Heart left ventricle (tissue), 16 donors: ENCODE measurements at regions of chr11 and their contacts with region 1.

Region 1: GRCh38 chr11:17077520-17078401 is at the start of gene RPS13:
- DNase-seq: peak; percentile 97 to 98 (median 98)
- ATAC-seq: peak; percentile 98 to 99 (median 99)
- H3K4me3 ChIP-seq: peak within 1 kb of the TSS; percentile 58 to 99 (median 92)
- H3K27ac ChIP-seq: peak within 1 kb of the TSS; percentile 69 to 98 (median 94)
- H3K4me1 ChIP-seq: peaks cover 6 to 38% (median 24%) of the 10 kb centered on the region in 12 donors
- H3K27me3 ChIP-seq: no peaks in the 10 kb centered on the region
- CTCF ChIP-seq: no peak
- POLR2A ChIP-seq: peak in 1 of 2 donors; percentile 80
- total RNA-seq, gene RPS13: 614 to 853 (median 747) TPM

Region 2: DNA sequence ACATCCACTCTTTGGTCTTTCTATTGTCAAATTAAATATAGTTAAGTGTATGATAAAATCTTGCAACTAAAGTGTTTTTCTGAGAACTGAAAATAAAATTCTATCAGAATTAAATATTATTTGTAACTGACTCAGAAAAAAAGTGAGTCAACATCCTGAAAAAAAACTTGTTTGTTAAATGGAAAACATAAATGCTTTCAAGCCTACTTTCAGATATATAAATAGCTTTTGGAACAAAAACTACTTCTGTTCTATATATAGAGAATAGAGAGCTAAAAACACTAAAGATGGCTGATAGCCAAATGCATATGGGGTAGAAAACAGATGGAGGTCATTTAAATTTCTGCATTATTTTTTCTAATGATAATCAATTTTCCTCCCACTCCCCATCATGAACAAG is 68.2 kb after region 1 on chr11:
- intact Hi-C with region 1: loop called in 1 of 10 experiments (anchors 10 kb)
- DNase-seq: no peak
- ATAC-seq: no peak
- H3K4me3 ChIP-seq: no peak overlapping the region
- H3K27ac ChIP-seq: no peak overlapping the region
- H3K4me1 ChIP-seq: peaks cover 8 to 36% (median 22%) of the 10 kb centered on the region in 12 donors
- H3K27me3 ChIP-seq: no peaks in the 10 kb centered on the region
- CTCF ChIP-seq: no peak
- POLR2A ChIP-seq: no peak

Region 3: DNA sequence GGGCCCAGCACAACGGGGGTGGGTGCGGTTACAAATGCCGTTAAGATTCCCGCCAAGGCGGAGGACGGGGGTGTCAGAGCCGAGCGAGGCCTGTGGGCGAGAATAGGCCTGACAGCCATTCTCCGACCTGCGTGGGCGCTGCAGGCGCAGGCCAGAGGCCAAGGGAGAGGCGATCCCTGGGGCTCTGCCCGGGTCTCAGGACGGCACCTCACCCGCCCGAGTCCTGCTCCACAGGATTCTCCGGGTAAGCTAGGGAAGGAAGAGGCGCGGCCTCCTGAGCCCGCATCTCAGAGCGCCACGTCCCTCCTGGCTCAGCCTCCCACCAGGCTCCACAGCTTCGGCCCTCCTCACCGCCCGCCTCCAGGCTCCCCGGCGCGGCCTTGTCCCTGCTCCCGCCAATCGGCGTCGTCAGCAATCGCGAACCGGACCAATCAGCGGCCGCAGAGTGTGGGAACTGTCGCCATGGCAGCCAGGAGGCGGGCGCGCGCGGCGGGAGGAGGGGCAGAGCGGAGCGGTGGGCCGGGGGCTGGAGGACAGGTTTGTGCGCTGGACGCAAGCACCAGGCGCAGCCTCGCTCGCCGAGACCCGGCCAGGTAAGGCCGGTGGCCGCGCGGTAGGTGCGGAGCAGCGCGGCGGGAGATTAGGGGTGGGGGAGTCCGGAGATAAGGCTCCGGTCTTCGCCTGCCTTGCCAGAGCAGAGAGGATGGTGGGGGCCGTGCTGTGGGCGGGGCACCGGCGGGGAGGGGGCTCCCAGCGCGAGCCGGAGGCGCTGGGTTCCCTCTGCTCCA is 198.7 kb after region 1 on chr11 and contains the start of gene NUCB2:
- intact Hi-C with region 1: loop called in 1 of 10 experiments (anchors 5 kb)
- DNase-seq: peak; percentile 98 to 99 (median 98)
- ATAC-seq: peak; percentile 98 to 99 (median 99)
- H3K4me3 ChIP-seq: peak within 1 kb of the TSS; percentile 66 to 97 (median 86)
- H3K27ac ChIP-seq: peak within 1 kb of the TSS; percentile 76 to 96 (median 90)
- H3K4me1 ChIP-seq: peaks cover 0 to 45% (median 9%) of the 10 kb centered on the region in 12 donors
- H3K27me3 ChIP-seq: no peaks in the 10 kb centered on the region
- CTCF ChIP-seq: peak in 1 of 12 donors; percentile 2
- POLR2A ChIP-seq: peak in 1 of 2 donors; percentile 92
- total RNA-seq, gene NUCB2: 41.4 to 180 (median 85.4) TPM